Heart right ventricle (tissue), 16 donors: ENCODE measurements at regions of chr5 and their contacts with region 1.

Region 1: GRCh38 chr5:111757355-111758283 is 625 bp upstream of the NREP start:
- DNase-seq: peak; percentile 97
- ATAC-seq: peak; percentile 89 to 96 (median 90)
- H3K4me3 ChIP-seq: peak overlapping the region; percentile 19 to 78 (median 70)
- H3K27ac ChIP-seq: peak overlapping the region; percentile 85 to 97 (median 92)
- H3K4me1 ChIP-seq: peaks cover 0 to 42% (median 29%) of the 10 kb centered on the region in 9 donors
- H3K27me3 ChIP-seq: no peaks in the 10 kb centered on the region
- CTCF ChIP-seq: peak in 6 of 9 donors; percentile 20 to 45 (median 34)

Region 2: GRCh38 chr5:111584651-111585050 is 173.0 kb before region 1 on chr5:
- intact Hi-C with region 1: loop called in 1 of 10 experiments (anchors 10 kb)
- DNase-seq: no peak
- ATAC-seq: peak in 2 of 8 donors; percentile 57 to 65
- H3K4me3 ChIP-seq: no peak overlapping the region
- H3K27ac ChIP-seq: no peak overlapping the region
- H3K4me1 ChIP-seq: peaks cover 0 to 56% (median 22%) of the 10 kb centered on the region in 9 donors
- H3K27me3 ChIP-seq: no peaks in the 10 kb centered on the region
- CTCF ChIP-seq: no peak

Region 3: GRCh38 chr5:111680737-111681413 is 76.7 kb before region 1 on chr5:
- intact Hi-C with region 1: loop called in 3 of 10 experiments (anchors 2 to 5 kb)
- DNase-seq: peak; percentile 14 to 88
- ATAC-seq: peak; percentile 80 to 93 (median 86)
- H3K4me3 ChIP-seq: peak overlapping the region in 4 of 10 donors; percentile 5 to 32 (median 20)
- H3K27ac ChIP-seq: peak overlapping the region in 9 of 10 donors; percentile 23 to 80 (median 67)
- H3K4me1 ChIP-seq: peaks cover 0 to 52% (median 32%) of the 10 kb centered on the region in 9 donors
- H3K27me3 ChIP-seq: no peaks in the 10 kb centered on the region
- CTCF ChIP-seq: no peak

Region 4: GRCh38 chr5:111853748-111854147 is 96.1 kb after region 1 on chr5:
- intact Hi-C with region 1: loop called in 1 of 10 experiments (anchors 5 kb)
- DNase-seq: peak in 1 of 2 donors; percentile 18
- ATAC-seq: peak in 6 of 8 donors; percentile 40 to 67 (median 58)
- H3K4me3 ChIP-seq: no peak overlapping the region
- H3K27ac ChIP-seq: no peak overlapping the region
- H3K4me1 ChIP-seq: peaks cover 0 to 35% (median 7%) of the 10 kb centered on the region in 9 donors
- H3K27me3 ChIP-seq: no peaks in the 10 kb centered on the region
- CTCF ChIP-seq: no peak